ENCODE measurements at regions of chr3 and their contacts with region 1.

Region 1: DNA sequence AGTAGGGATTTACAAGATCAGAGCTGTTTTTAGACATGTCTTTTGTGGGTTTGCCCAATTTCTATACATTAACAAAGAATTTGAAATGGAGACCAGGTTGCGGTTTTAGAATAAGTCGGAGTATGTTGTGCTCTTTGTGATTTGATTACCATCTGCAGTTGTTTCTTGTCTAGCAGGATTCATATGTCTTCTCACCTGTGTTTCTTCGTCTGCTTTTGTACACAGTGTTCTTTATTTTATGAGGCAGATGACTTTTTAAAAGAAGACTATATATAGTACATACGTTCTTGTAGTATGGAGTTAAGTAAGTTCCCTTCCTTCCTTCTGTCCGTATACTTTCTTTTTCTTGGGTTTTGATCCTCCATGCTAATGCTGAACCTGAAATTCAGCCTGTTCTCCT is 175.3 kb upstream of the LRRFIP2 start:
- DNase-seq: no peak
- ATAC-seq: peak in 2 of 4 donors; percentile 28 to 57
- H3K4me3 ChIP-seq: no peak overlapping the region
- H3K27ac ChIP-seq: no peak overlapping the region
- H3K4me1 ChIP-seq: no peaks in the 10 kb centered on the region
- H3K27me3 ChIP-seq: no peaks in the 10 kb centered on the region
- CTCF ChIP-seq: no peak

Region 2: DNA sequence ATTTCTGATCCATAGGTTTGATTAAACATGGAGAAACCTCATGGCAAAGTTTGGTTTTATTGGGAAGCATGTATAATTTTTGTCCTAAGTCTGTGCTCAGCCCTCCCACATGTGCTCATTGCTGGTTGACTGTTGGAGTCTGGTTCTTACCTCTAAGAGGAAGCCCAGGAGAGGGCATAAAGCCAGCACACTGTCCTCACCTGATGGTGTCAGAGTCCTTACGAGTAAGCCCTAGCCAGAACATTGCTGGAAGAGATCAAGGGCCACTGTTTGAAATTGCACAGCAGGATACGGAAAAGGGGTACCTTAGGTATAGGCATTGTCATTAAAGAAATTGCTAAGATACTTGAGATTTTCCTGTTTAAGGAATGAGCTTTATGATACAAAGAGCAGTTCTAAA is 335.0 kb before region 1 on chr3:
- intact Hi-C with region 1: loop called in 1 of 2 experiments (anchors 10 kb)
- DNase-seq: no peak
- ATAC-seq: peak in 1 of 4 donors; percentile 65
- H3K4me3 ChIP-seq: no peak overlapping the region
- H3K27ac ChIP-seq: no peak overlapping the region
- H3K4me1 ChIP-seq: no peaks in the 10 kb centered on the region
- H3K27me3 ChIP-seq: no peaks in the 10 kb centered on the region
- CTCF ChIP-seq: no peak

Region 3: GRCh38 chr3:37096288-37096687 is 253.4 kb before region 1 on chr3:
- intact Hi-C with region 1: loop called in 1 of 2 experiments (anchors 10 kb)
- DNase-seq: no peak
- ATAC-seq: no peak
- H3K4me3 ChIP-seq: no peak overlapping the region
- H3K27ac ChIP-seq: no peak overlapping the region
- H3K4me1 ChIP-seq: no peaks in the 10 kb centered on the region
- H3K27me3 ChIP-seq: no peaks in the 10 kb centered on the region
- CTCF ChIP-seq: no peak